WTC11 (cell line): ENCODE measurements at regions of chr20 and their contacts with region 1.

Region 1: GRCh38 chr20:34069341-34070078 is 42.5 kb downstream of the EIF2S2 start:
- DNase-seq: peak; percentile 79
- ATAC-seq: peak; percentile 76
- H3K4me3 Mint-ChIP-seq: no peak overlapping the region
- H3K27ac Mint-ChIP-seq: peak overlapping the region; percentile 27; the same call in 1 of the 2 replicates
- H3K4me1 Mint-ChIP-seq: peaks cover 46% of the 10 kb centered on the region
- H3K27me3 Mint-ChIP-seq: no peaks in the 10 kb centered on the region
- CTCF ChIP-seq: peak; percentile 44; the same call in 1 of the 2 replicates

Region 2: GRCh38 chr20:33791959-33792597 is 277.4 kb before region 1 on chr20:
- CTCF ChIA-PET with region 1: interaction called, 12 read pairs
- POLR2A ChIA-PET with region 1: no interaction called
- DNase-seq: peak; percentile 75
- ATAC-seq: peak; percentile 86
- H3K4me3 Mint-ChIP-seq: no peak overlapping the region
- H3K27ac Mint-ChIP-seq: no peak overlapping the region
- H3K4me1 Mint-ChIP-seq: peaks cover 14% of the 10 kb centered on the region
- H3K27me3 Mint-ChIP-seq: no peaks in the 10 kb centered on the region
- CTCF ChIP-seq: peak; percentile 94

Region 3: DNA sequence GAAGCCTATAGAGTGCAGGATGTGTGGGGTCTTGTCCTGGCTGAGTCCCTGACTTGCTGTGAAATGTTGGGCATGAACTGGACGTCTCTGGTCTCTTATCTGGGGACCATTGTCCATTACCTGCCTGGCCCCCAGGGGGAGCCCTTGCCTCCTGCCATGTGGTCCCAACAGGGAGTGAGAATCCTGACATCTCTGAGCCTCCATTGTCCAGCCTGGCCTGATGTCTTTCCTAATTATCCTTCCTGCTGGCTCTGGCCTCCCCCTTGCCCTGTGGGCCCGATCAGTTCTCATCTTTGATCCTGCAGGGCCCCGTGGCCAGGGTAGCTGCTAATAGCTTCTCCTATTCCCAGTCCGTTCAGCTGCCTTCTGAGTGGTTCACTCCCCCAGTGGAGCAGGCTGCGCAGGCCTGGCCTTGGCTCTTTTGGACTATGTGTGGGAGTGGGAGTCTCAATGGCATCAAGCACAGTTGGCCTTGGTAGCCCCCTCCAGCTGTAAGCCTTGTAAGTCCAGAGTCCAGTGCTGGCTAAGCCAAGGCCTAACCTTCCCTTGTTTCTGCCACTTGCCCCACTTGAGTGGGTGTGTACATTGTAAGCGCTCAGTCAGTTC is 153.7 kb before region 1 on chr20:
- CTCF ChIA-PET with region 1: interaction called, 12 read pairs
- POLR2A ChIA-PET with region 1: no interaction called
- DNase-seq: peak; percentile 74
- ATAC-seq: peak; percentile 89
- H3K4me3 Mint-ChIP-seq: no peak overlapping the region
- H3K27ac Mint-ChIP-seq: no peak overlapping the region
- H3K4me1 Mint-ChIP-seq: peaks cover 14% of the 10 kb centered on the region
- H3K27me3 Mint-ChIP-seq: no peaks in the 10 kb centered on the region; the same call in 1 of the 2 replicates
- CTCF ChIP-seq: peak; percentile 80

Region 4: DNA sequence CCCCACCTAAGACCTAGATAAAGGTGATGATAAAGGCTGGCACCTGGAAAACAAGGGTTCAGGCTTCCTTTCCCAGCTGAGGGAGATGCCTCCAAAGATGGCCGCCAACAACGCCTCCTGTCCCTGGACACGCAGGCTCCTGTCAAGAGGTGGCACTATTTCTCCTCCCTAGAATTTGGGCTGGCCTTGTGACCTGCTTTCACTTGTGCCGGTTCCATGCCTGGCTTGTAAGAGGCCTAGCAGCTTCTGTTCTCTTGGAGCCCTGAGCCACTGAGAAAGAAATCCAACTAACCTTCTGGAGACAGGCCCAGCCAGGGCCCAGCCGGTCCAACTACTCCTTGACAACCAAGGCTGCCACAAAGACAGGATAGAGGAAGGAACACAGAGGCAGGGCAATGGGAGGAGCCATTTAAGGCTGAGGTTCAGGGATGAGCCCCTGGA is 136.0 kb before region 1 on chr20:
- CTCF ChIA-PET with region 1: interaction called, 51 read pairs
- POLR2A ChIA-PET with region 1: no interaction called
- DNase-seq: peak; percentile 71
- ATAC-seq: peak; percentile 97
- H3K4me3 Mint-ChIP-seq: no peak overlapping the region
- H3K27ac Mint-ChIP-seq: peak overlapping the region; percentile 76
- H3K4me1 Mint-ChIP-seq: no peaks in the 10 kb centered on the region
- H3K27me3 Mint-ChIP-seq: no peaks in the 10 kb centered on the region; the same call in 1 of the 2 replicates
- CTCF ChIP-seq: no peak

Region 5: GRCh38 chr20:34022154-34022838 is 47.2 kb before region 1 on chr20:
- CTCF ChIA-PET with region 1: interaction called, 39 read pairs
- POLR2A ChIA-PET with region 1: no interaction called
- DNase-seq: no peak
- ATAC-seq: peak; percentile 74
- H3K4me3 Mint-ChIP-seq: no peak overlapping the region
- H3K27ac Mint-ChIP-seq: no peak overlapping the region; the same call in 1 of the 2 replicates
- H3K4me1 Mint-ChIP-seq: peaks cover 58% of the 10 kb centered on the region
- H3K27me3 Mint-ChIP-seq: no peaks in the 10 kb centered on the region
- CTCF ChIP-seq: no peak

Region 6: DNA sequence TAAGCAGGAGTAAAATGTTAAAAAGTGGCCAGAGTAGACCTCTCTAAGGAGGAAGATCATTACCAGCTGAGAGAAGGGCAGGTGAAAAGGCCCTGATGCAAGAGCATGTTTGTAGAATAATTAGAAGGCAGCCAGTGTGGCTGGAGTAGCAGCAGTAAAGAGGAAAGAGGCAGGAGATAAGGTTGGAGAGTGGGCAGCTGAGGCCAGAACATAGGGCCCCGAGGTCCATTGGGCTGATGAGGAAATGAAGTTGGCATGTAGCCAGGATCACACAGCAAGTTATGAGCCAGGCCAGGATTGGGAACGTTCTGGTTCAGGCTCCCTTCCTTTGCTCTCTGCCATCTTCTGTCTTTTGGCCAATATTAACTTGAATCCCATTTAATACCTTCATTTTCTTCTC is 24.2 kb before region 1 on chr20:
- CTCF ChIA-PET with region 1: interaction called, 15 read pairs
- POLR2A ChIA-PET with region 1: no interaction called
- DNase-seq: no peak
- ATAC-seq: no peak; the same call in 1 of the 2 replicates
- H3K4me3 Mint-ChIP-seq: peak overlapping the region; percentile 17; the same call in 1 of the 2 replicates
- H3K27ac Mint-ChIP-seq: peak overlapping the region; percentile 12; the same call in 1 of the 2 replicates
- H3K4me1 Mint-ChIP-seq: peaks cover 52% of the 10 kb centered on the region
- H3K27me3 Mint-ChIP-seq: no peaks in the 10 kb centered on the region
- CTCF ChIP-seq: no peak

Region 7: GRCh38 chr20:34055290-34055689 is 14.2 kb before region 1 on chr20:
- CTCF ChIA-PET with region 1: interaction called, 25 read pairs
- POLR2A ChIA-PET with region 1: no interaction called
- DNase-seq: no peak
- ATAC-seq: no peak
- H3K4me3 Mint-ChIP-seq: no peak overlapping the region
- H3K27ac Mint-ChIP-seq: no peak overlapping the region
- H3K4me1 Mint-ChIP-seq: peaks cover 10% of the 10 kb centered on the region
- H3K27me3 Mint-ChIP-seq: no peaks in the 10 kb centered on the region
- CTCF ChIP-seq: no peak